A549 (cell line): ENCODE measurements at regions of chr10 and their contacts with region 1.

Region 1: DNA sequence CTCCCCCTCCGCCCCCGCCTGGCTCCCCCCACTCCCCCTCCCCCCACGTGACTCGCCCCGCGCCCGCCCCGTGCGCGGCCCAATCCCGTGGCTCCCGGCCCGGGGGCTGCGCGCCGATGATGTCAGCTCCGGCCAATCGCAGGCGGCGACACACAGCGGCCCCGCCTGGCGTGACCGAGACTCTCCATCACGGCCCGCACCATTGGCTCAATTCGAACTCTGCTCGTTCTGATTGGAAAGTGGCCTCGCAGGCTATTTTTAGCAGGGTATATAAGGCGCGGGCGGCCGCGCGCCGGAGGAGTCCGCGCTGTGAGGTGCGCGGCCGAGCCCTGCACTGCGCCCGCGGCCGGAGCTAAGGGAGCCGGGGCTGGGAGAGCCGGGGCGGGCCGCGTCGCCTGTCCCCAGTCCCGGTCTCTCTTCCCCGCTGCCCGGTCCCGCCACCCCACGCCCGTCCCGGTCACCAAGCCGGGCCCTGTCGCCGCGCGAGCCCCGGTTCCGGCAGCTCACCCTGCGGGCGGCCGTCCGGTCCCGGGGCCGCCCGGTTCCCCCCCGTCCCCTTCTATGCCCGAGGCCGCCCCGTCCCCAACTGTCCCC is 345 bp upstream of the KLF6 start:
- DNase-seq: peak; percentile 97 to 99
- ATAC-seq: peak; percentile 70 to 80
- H3K4me3 ChIP-seq: peak overlapping the region; percentile 82
- H3K27ac ChIP-seq: peak overlapping the region; percentile 100
- H3K4me1 ChIP-seq: peaks cover 26% of the 10 kb centered on the region
- CTCF ChIP-seq: no peak
- EP300 ChIP-seq: peak in 1 of 2 experiments; percentile 22; a peak in 2 of 5 replicates
- POLR2A ChIP-seq: peak; percentile 98
- RAD21 ChIP-seq: no peak; a peak in 1 of 5 replicates

Region 2: GRCh38 chr10:3197348-3198003 is 587.9 kb before region 1 on chr10:
- CTCF ChIA-PET with region 1: interaction called, 4 read pairs
- POLR2A ChIA-PET with region 1: interaction called, 14 read pairs
- DNase-seq: peak; percentile 78 to 92
- ATAC-seq: peak; percentile 96 to 98
- H3K4me3 ChIP-seq: peak overlapping the region; percentile 28; the same call in 2 of the 3 replicates
- H3K27ac ChIP-seq: peak overlapping the region; percentile 66 to 80
- H3K4me1 ChIP-seq: peaks cover 18% of the 10 kb centered on the region
- CTCF ChIP-seq: peak; percentile 93
- EP300 ChIP-seq: no peak; a peak in 1 of 5 replicates
- POLR2A ChIP-seq: no peak
- RAD21 ChIP-seq: peak; percentile 96 to 99

Region 3: DNA sequence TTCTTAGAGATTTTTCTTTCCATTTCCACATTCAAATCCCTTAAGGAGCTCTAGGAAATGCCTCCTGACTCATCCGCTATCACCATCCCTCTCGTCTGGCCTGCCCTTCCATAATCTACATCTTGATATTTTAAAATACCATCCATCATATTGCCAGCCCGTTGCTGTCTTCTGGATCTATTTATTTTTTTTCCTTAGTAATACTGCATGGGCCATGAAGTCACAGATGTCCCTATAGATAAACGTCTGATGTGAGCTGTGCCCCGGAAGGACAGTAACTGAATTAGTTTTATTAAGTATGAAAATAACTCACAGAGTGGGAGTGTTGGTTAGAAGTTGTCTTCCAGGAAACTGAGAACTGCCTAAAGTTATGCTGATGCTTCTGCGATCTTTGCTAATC is 76.5 kb before region 1 on chr10:
- CTCF ChIA-PET with region 1: no interaction called
- POLR2A ChIA-PET with region 1: no interaction called
- DNase-seq: no peak
- ATAC-seq: no peak
- H3K4me3 ChIP-seq: no peak overlapping the region
- H3K27ac ChIP-seq: no peak overlapping the region
- H3K4me1 ChIP-seq: no peaks in the 10 kb centered on the region
- CTCF ChIP-seq: no peak
- EP300 ChIP-seq: no peak
- POLR2A ChIP-seq: no peak
- RAD21 ChIP-seq: no peak

Region 4: GRCh38 chr10:3754727-3755439 is 30.5 kb before region 1 on chr10:
- CTCF ChIA-PET with region 1: no interaction called
- POLR2A ChIA-PET with region 1: interaction called, 16 read pairs
- DNase-seq: peak; percentile 72 to 84
- ATAC-seq: peak; percentile 91 to 97
- H3K4me3 ChIP-seq: no peak overlapping the region
- H3K27ac ChIP-seq: peak overlapping the region; percentile 59 to 70
- H3K4me1 ChIP-seq: peaks cover 31% of the 10 kb centered on the region
- CTCF ChIP-seq: no peak
- EP300 ChIP-seq: peak; percentile 50 to 60; a peak in 2 of 5 replicates
- POLR2A ChIP-seq: no peak
- RAD21 ChIP-seq: peak in 1 of 2 experiments; percentile 42; a peak in 2 of 5 replicates

Region 5: GRCh38 chr10:3828404-3829155 is 43.2 kb after region 1 on chr10:
- CTCF ChIA-PET with region 1: interaction called, 3 read pairs
- POLR2A ChIA-PET with region 1: interaction called, 24 read pairs
- DNase-seq: no peak
- ATAC-seq: peak; percentile 25 to 52; a peak in 5 of 6 replicates
- H3K4me3 ChIP-seq: peak overlapping the region; percentile 38
- H3K27ac ChIP-seq: peak overlapping the region; percentile 77 to 83
- H3K4me1 ChIP-seq: peaks cover 59% of the 10 kb centered on the region
- CTCF ChIP-seq: no peak
- EP300 ChIP-seq: no peak
- POLR2A ChIP-seq: no peak
- RAD21 ChIP-seq: no peak

Region 6: DNA sequence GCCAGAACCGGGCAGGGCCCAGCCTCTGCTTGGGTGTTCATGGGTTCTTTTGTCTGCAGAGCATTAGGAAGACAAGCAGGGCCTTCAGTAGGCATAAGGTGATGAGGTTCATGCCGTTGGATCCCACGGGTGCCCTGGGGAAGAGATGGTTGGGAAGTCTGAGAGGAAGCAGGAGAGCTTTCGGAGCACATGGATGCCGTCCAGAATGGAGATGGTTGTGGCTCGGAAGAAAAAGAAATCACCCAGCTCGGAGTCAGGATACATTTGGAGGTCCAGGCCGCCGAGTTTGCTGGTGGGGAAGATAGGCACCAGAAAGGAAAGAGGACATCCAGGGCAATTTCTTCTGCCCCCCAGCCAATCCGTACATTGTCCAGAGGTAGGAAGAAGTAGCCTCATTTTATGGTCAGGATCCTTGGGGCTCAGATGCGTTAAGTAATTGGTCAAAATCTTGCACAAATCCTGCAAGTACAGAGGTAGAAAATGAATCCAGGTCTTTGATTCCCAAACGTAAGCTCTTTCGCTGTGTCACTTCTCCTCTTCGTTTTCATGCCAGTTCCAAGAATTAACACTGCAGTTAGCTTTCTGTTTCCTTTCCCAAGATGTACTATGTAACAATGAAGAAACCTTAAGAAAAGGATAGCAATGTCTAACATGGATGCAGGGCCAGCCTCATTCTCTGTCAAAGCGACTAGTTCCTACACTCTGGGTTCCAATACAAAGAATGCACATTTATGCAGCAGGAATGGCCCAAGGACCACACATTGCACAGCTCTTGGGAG is 147.4 kb after region 1 on chr10:
- CTCF ChIA-PET with region 1: no interaction called
- POLR2A ChIA-PET with region 1: no interaction called
- DNase-seq: no peak
- ATAC-seq: no peak
- H3K4me3 ChIP-seq: no peak overlapping the region
- H3K27ac ChIP-seq: no peak overlapping the region
- H3K4me1 ChIP-seq: no peaks in the 10 kb centered on the region
- CTCF ChIP-seq: no peak
- EP300 ChIP-seq: no peak
- POLR2A ChIP-seq: no peak
- RAD21 ChIP-seq: no peak

Region 7: DNA sequence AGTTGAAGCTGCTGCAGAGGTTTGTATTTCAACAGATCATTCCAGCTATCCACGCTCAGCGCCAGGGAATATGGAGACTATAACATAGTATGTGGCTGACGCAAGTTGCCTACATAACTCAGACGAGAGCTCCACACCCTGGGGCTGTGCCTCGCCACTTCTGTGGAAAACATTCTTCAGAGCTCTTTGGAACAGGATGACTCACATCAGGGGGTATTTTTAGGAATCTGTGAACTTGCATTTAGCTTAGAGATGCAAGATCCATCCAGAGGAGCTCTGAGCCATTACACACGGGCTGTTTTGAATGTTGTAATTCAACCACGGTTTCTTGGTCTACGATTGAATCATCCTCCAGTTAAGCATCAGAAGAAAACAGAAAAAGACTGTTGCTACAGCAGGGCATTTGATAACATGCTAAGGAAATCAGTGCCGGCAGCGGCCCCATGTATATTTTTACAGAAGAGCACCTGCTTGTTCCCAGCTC is 559.2 kb after region 1 on chr10:
- CTCF ChIA-PET with region 1: no interaction called
- POLR2A ChIA-PET with region 1: interaction called, 36 read pairs
- DNase-seq: peak; percentile 69 to 92
- ATAC-seq: peak; percentile 99
- H3K4me3 ChIP-seq: 0 out of 3 replicates have a peak overlapping the region, but pooled peaks have one; percentile 14
- H3K27ac ChIP-seq: peak overlapping the region; percentile 80 to 88
- H3K4me1 ChIP-seq: peaks cover 23% of the 10 kb centered on the region
- CTCF ChIP-seq: no peak; the same call in 2 of the 3 replicates
- EP300 ChIP-seq: peak; percentile 64 to 82; a peak in 3 of 5 replicates
- POLR2A ChIP-seq: no peak
- RAD21 ChIP-seq: peak; percentile 30 to 73; a peak in 4 of 5 replicates

Region 8: DNA sequence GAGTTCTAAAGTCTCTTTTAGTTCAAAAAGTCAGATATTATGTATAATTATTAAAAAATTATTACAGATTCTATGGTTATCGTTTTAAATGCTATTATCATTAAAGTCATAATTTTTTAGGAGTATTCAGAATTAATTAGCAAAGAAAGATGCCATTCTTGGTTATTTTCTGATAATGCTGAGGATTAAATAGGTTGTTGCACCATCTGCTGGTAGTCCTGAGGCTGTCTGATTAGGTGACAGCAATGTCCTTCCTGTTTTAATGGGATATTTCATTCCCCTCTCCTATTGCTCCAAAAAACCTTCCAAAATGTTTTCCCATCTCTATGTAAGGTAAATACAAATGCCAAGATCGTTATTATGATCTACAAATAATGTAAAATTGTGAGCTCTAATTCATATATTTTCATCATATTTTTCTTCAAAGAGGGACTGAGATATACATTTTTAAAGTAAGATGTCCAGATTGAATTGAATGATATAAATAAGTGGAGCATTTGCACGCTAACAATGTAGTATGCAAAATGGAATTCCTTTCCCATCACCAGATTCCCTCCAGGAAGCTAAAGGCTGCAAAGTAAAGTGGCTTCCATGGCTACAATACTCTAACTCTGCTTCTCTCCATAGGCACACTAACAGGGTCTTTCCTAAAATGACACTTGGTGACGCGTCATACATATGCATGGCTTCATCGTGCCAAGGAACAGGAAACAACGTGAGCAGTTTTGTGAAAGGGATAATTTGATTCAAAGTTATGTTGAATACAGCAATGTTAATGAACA is 981.9 kb after region 1 on chr10:
- CTCF ChIA-PET with region 1: interaction called, 6 read pairs
- POLR2A ChIA-PET with region 1: interaction called, 16 read pairs
- DNase-seq: peak; percentile 13 to 57
- ATAC-seq: peak in 1 of 2 experiments; percentile 66; a peak in 3 of 6 replicates
- H3K4me3 ChIP-seq: no peak overlapping the region
- H3K27ac ChIP-seq: peak overlapping the region; percentile 59 to 72
- H3K4me1 ChIP-seq: peaks cover 43% of the 10 kb centered on the region
- CTCF ChIP-seq: peak; percentile 93
- EP300 ChIP-seq: no peak
- POLR2A ChIP-seq: no peak
- RAD21 ChIP-seq: peak; percentile 97